Left lung (tissue), 14 donors: ENCODE measurements at regions of chr4 and their contacts with region 1.

Region 1: GRCh38 chr4:6873792-6874461 is 35.7 kb upstream of the TBC1D14 start:
- DNase-seq: peak; percentile 31 to 90 (median 67)
- ATAC-seq: peak; percentile 86
- H3K4me3 ChIP-seq: no peak overlapping the region
- H3K27ac ChIP-seq: peak overlapping the region in 1 of 2 donors; percentile 77
- H3K4me1 ChIP-seq: peaks cover 0 to 40% of the 10 kb centered on the region in 2 donors
- H3K27me3 ChIP-seq: no peaks in the 10 kb centered on the region
- CTCF ChIP-seq: peak; percentile 70 to 84

Region 2: DNA sequence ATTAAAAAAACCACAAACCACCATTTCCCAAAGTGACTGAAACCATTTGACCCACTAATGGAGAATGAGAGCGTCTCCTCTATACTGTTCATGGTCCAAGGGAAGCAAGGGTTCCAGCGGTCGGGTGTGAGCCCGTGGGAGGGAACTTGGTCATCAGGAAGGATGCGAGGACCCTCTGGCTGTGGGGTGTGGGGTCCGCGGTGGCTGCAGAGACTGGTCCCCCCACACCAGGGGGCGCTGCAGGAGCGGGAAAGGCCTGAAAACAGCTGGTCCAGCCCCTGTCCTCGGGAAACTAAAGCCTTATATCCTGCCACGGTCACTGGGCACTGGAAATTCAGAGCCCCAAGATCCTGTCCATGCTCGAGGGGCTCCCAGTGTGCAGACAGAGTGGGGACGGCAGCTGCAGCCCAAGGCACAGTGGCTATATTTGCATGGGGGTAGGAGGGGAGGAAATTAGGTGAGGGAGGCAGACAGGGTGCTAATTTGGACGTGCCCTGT is 153.7 kb before region 1 on chr4:
- intact Hi-C with region 1: loop called in 1 of 2 experiments (anchors 5 kb)
- DNase-seq: peak; percentile 69 to 96 (median 84)
- ATAC-seq: peak; percentile 78
- H3K4me3 ChIP-seq: no peak overlapping the region
- H3K27ac ChIP-seq: no peak overlapping the region
- H3K4me1 ChIP-seq: peaks cover 8 to 30% of the 10 kb centered on the region in 2 donors
- H3K27me3 ChIP-seq: no peaks in the 10 kb centered on the region
- CTCF ChIP-seq: peak; percentile 89 to 96

Region 3: GRCh38 chr4:6783053-6783981 is 90.6 kb before region 1 on chr4:
- intact Hi-C with region 1: loop called in 1 of 2 experiments (anchors 10 kb)
- DNase-seq: peak; percentile 90 to 97 (median 92)
- ATAC-seq: peak; percentile 92
- H3K4me3 ChIP-seq: peak overlapping the region; percentile 73 to 94
- H3K27ac ChIP-seq: peak overlapping the region; percentile 96 to 99
- H3K4me1 ChIP-seq: peaks cover 9 to 50% of the 10 kb centered on the region in 2 donors
- H3K27me3 ChIP-seq: no peaks in the 10 kb centered on the region
- CTCF ChIP-seq: no peak

Region 4: DNA sequence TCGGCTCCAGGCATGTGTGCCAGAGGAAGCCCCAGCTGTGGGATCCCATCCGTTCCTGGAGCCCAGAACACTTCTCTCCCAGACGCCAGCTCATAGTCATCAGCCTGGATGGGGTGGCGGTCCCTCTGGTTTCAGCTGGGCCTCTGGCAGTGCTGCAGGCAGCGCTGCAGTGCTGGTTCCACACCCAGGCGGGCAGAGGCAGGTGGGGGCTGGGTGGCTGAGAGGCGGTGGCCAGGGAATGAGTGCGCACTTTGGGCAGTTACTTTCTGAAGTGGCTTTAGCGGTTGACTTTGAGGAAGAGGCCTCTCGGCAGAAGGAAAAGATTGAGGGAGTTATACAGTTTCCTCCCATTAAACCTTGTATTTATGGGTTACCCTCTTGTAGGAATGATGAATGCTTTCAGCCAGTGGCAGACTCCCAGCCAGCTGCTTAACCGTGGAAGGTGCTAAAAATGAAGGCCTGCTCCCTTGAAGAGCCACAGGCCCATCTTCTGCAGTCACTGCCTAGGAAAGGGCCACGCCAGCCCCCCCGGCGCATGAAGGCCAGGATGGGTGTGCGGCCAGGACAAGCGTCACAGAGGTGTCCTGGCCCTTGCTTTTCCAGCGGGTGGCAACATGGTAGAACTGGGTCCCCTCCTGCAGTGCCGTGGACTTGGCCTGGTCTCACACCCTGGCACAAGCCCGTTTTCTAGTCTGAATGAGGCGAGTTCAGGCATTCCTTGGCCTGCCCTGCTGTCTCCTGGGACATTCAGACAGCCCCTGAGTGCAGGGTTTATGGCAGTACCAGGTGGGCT is 179.2 kb after region 1 on chr4:
- intact Hi-C with region 1: no loop called
- DNase-seq: peak; percentile 10 to 96 (median 74)
- ATAC-seq: peak; percentile 98
- H3K4me3 ChIP-seq: no peak overlapping the region
- H3K27ac ChIP-seq: peak overlapping the region in 1 of 2 donors; percentile 80
- H3K4me1 ChIP-seq: peaks cover 6 to 45% of the 10 kb centered on the region in 2 donors
- H3K27me3 ChIP-seq: no peaks in the 10 kb centered on the region
- CTCF ChIP-seq: no peak